Dorsolateral prefrontal cortex (tissue), 120 donors: ENCODE measurements at regions of chr17 and their contacts with region 1.

Region 1: GRCh38 chr17:78970834-78971773 is 8.6 kb downstream of the LGALS3BP start:
- DNase-seq: peak; percentile 79 to 87 (median 84)
- H3K4me3 ChIP-seq: peak overlapping the region in 11 of 59 donors; percentile 7 to 35 (median 12)
- H3K27ac ChIP-seq: peak overlapping the region in 50 of 59 donors; percentile 3 to 90 (median 66)
- H3K27me3 ChIP-seq: no peaks in the 10 kb centered on the region
- CTCF ChIP-seq: peak; percentile 84 to 98 (median 93)

Region 2: GRCh38 chr17:78883164-78884122 is 87.7 kb before region 1 on chr17:
- intact Hi-C with region 1: loop called in 1 of 2 experiments (anchors 5 kb)
- DNase-seq: peak; percentile 60 to 91 (median 89)
- H3K4me3 ChIP-seq: peak overlapping the region; percentile 15 to 65 (median 48)
- H3K27ac ChIP-seq: peak overlapping the region; percentile 89 to 100 (median 99)
- H3K27me3 ChIP-seq: no peaks in the 10 kb centered on the region
- CTCF ChIP-seq: peak in 6 of 56 donors; percentile 5 to 32 (median 14)

Region 3: DNA sequence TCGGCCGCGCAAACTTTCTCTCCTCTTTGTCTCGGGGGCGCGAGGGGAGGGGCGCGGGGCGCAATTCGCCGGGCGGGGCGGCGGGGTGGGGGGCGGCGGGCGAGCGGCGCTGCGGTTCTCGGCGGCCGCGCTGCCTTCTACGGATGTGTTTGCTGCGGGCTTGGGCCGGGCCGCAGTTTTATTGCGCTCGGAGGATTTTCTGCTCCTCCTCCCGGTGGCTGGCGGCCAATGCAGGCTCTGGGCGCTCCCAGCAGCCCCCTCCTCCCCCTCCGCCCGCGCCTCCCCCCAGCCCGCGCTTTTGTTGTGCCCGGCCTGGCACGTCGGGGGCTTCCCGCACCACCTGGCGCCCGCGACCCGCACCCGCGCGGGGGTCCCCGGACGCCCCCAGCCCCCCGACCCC is 45.9 kb before region 1 on chr17 and contains the start of gene TIMP2:
- intact Hi-C with region 1: loop called (anchors 5 kb)
- DNase-seq: peak; percentile 68 to 94 (median 88)
- H3K4me3 ChIP-seq: peak within 1 kb of the TSS; percentile 54 to 82 (median 70)
- H3K27ac ChIP-seq: peak within 1 kb of the TSS; percentile 83 to 99 (median 95)
- H3K27me3 ChIP-seq: no peaks in the 10 kb centered on the region
- CTCF ChIP-seq: peak in 38 of 56 donors; percentile 13 to 49 (median 32)
- total RNA-seq, gene TIMP2: 97.8 to 275 (median 166) TPM